HepG2 (cell line): ENCODE measurements at regions of chr14 and their contacts with region 1.

Region 1: GRCh38 chr14:49633640-49634546 is 1.2 kb downstream of the DNAAF2 start:
- DNase-seq: peak; percentile 89
- ATAC-seq: peak; percentile 85
- H3K4me3 ChIP-seq: peak overlapping the region; percentile 87 to 99 (median 96)
- H3K27ac ChIP-seq: peak overlapping the region; percentile 93
- H3K4me1 ChIP-seq: peaks cover 54% of the 10 kb centered on the region
- H3K27me3 ChIP-seq: no peaks in the 10 kb centered on the region; a peak in 1 of 5 replicates
- CTCF ChIP-seq: peak; percentile 99
- EP300 ChIP-seq: no peak
- POLR2A ChIP-seq: peak; percentile 74 to 83
- RAD21 ChIP-seq: peak; percentile 93

Region 2: DNA sequence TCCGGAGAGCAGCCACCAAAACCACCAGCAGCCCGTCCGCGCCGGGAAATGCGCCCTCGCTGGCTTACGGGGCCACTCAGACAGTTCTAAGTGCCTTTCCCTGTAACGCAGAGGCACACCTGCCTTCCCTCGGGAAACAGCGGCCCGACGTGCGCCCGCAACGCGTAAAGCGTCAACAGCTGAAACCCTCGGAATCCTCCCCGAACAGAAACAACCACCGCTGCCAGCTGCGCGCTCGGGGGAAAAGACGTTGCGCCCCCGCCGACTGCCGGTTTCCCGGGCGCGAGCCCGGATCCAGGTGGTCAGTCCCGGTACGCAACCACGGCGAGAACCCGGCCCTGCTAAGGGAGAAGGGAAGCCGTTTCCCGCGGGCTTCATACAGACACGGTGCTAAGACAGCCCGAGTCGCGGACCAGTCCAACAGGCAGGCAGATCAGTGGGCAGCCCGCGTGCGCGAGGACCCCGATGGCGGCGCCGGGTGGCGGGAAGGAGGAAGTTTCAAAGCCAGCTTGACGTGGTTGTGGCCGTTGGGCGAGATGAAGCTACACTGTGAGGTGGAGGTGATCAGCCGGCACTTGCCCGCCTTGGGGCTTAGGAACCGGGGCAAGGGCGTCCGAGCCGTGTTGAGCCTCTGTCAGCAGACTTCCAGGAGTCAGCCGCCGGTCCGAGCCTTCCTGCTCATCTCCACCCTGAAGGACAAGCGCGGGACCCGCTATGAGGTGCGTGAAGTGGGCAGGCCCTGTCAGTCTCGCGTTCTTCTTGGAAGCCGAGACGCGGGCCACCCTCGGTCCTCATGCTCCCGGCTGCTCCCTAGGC is 35.2 kb before region 1 on chr14 and contains the start of gene LRR1:
- CTCF ChIA-PET with region 1: no interaction called
- POLR2A ChIA-PET with region 1: interaction called, 7 read pairs
- in situ Hi-C with region 1: no loop called
- intact Hi-C with region 1: loop called (anchors 1 kb)
- DNase-seq: peak; percentile 76
- ATAC-seq: peak; percentile 76
- H3K4me3 ChIP-seq: peak within 1 kb of the TSS; percentile 79 to 91 (median 83)
- H3K27ac ChIP-seq: peak within 1 kb of the TSS; percentile 97
- H3K4me1 ChIP-seq: peaks cover 39% of the 10 kb centered on the region
- H3K27me3 ChIP-seq: no peaks in the 10 kb centered on the region; a peak in 1 of 5 replicates
- CTCF ChIP-seq: 0 out of 2 replicates have a peak, but pooled peaks have one; percentile 12
- EP300 ChIP-seq: no peak
- POLR2A ChIP-seq: peak; percentile 67 to 93
- RAD21 ChIP-seq: peak; percentile 30
- total RNA-seq, gene LRR1: 36.2 and 49.8 TPM in 2 replicates

Region 3: DNA sequence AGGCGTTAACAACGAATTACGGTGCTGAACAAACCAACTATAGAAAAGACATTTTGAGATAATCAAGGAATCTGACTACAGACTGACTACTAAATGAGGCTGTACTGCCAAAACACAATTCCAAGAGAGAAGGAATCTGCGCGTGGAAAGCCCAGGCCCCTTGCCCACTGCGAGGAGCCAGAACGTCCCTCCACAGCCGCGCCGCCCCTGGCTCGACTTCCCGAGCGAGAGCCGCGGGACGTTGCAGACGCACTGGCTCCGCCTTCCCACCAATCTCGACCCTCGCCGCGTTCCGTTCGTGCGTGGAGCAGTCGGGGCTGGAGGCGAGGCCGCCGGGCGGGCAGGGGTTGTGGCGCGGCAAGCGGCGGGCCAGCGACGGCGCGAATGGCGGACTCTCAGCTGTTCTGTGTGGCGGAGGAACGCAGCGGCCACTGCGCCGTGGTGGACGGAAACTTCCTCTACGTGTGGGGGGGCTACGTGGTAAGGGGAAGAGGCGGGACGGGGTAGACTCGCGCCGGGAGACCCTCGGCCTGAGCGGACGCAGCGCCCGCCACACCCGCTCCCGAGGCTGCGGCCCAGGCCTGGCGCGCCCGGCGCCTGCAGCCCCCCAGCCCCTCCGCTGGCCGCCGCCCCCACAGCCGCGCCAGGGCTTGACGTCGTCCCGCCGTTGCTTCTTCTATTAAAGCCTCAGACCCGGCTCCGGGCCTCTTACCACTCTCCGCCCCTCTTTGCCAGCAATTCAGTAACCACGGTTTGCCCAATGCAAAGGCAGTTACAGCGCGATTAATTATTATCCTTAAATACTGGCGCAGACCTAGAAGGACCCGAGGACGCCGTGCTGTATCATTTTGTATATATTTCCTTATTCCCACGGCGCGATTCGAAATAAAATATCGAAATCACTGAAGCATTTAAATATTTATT is 59.2 kb after region 1 on chr14 and contains the start of gene KLHDC1:
- CTCF ChIA-PET with region 1: no interaction called
- POLR2A ChIA-PET with region 1: interaction called, 23 read pairs
- in situ Hi-C with region 1: no loop called
- intact Hi-C with region 1: no loop called
- DNase-seq: peak; percentile 66
- ATAC-seq: peak; percentile 83
- H3K4me3 ChIP-seq: peak within 1 kb of the TSS; percentile 67 to 88 (median 75)
- H3K27ac ChIP-seq: peak within 1 kb of the TSS; percentile 77
- H3K4me1 ChIP-seq: peaks cover 39% of the 10 kb centered on the region
- H3K27me3 ChIP-seq: no peaks in the 10 kb centered on the region; a peak in 1 of 5 replicates
- CTCF ChIP-seq: peak; percentile 35; the same call in 1 of the 2 replicates
- EP300 ChIP-seq: no peak
- POLR2A ChIP-seq: peak; percentile 50 to 70; a peak in 3 of 4 replicates
- RAD21 ChIP-seq: 0 out of 2 replicates have a peak, but pooled peaks have one; percentile 31
- total RNA-seq, gene KLHDC1: 0.11 TPM in 1 of 2 replicates, not detected in the other

Region 4: GRCh38 chr14:49828640-49829039 is 194.7 kb after region 1 on chr14:
- CTCF ChIA-PET with region 1: interaction called, 11 read pairs
- POLR2A ChIA-PET with region 1: interaction called, 3 read pairs
- in situ Hi-C with region 1: loop called (anchors 10 kb)
- intact Hi-C with region 1: loop called (anchors 1 kb)
- DNase-seq: no peak
- ATAC-seq: no peak
- H3K4me3 ChIP-seq: no peak overlapping the region
- H3K27ac ChIP-seq: no peak overlapping the region
- H3K4me1 ChIP-seq: no peaks in the 10 kb centered on the region
- H3K27me3 ChIP-seq: no peaks in the 10 kb centered on the region
- CTCF ChIP-seq: no peak
- EP300 ChIP-seq: no peak
- POLR2A ChIP-seq: no peak
- RAD21 ChIP-seq: no peak